K562 (cell line): ENCODE measurements at regions of chrX and their contacts with region 1.

Region 1: GRCh38 chrX:153947009-153947769 is 2.7 kb upstream of the RENBP start:
- DNase-seq: peak; percentile 62 to 90 (median 72)
- ATAC-seq: peak; percentile 92
- H3K4me3 ChIP-seq: no peak overlapping the region
- H3K27ac ChIP-seq: peak overlapping the region; percentile 53; the same call in 2 of the 3 replicates
- H3K4me1 ChIP-seq: peaks cover 8 to 80% of the 10 kb centered on the region in 2 experiments; a peak in 4 of 5 replicates
- H3K27me3 ChIP-seq: no peaks in the 10 kb centered on the region
- CTCF ChIP-seq: peak; percentile 97 to 99 (median 99)
- EP300 ChIP-seq: no peak
- POLR2A ChIP-seq: peak; percentile 56; the same call in 1 of the 2 replicates
- RAD21 ChIP-seq: peak; percentile 74

Region 2: DNA sequence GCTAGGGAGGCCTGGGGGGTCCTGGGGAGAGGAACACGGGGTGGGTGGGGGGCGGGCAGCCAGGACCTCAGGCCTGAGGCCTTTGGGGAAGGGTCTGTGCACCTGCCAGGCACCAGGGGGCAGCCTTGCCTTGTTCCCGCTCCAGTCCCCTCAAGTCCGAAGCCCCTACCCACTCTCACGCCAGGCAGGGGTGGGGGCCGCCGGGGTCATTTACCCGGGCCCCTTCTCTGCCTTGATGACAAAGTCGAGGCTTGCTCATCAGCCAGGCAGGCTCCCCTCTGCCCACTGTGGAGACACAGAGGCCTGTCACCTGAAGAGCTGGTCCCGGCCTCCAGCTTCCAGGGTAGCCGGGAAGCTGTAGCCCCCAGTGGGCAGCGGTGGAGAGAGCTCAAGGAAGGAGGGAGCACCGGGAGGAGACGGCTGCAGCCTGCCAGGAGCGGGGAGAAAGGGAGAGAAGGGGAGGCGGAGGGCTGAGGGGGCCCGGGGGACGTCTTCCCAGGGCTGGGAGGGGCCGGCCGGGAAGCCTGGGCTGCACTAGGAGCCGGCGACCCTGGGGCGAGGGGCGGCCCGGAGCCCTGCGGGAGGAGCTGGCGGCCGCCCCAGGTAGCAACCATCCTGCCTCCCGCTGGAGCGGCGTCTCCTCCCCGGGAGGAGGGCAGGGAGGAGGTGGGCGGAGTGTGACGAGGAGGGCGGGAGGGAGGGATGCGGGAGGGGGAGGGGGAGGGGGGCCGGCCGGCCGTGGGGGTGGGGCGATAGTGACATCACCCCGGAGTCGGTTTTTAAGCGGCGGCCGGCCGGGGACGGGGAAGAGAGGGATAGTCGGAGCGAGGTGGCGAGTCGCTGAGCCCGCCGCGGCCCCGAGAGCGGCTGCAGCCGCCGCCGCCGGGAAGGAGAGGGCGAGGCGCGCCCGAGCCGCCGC is 259.8 kb before region 1 on chrX and contains the start of gene SLC6A8:
- CTCF ChIA-PET with region 1: no interaction called
- POLR2A ChIA-PET with region 1: no interaction called
- in situ Hi-C with region 1: no loop called
- intact Hi-C with region 1: no loop called
- DNase-seq: peak; percentile 78 to 90 (median 82)
- ATAC-seq: peak; percentile 64
- H3K4me3 ChIP-seq: peak within 1 kb of the TSS; percentile 51
- H3K27ac ChIP-seq: peak within 1 kb of the TSS; percentile 92
- H3K4me1 ChIP-seq: peaks cover 16 to 62% of the 10 kb centered on the region in 2 experiments; a peak in 4 of 5 replicates
- H3K27me3 ChIP-seq: no peaks in the 10 kb centered on the region
- CTCF ChIP-seq: peak; percentile 28 to 39 (median 38); a peak in 4 of 6 replicates
- EP300 ChIP-seq: no peak
- POLR2A ChIP-seq: no peak
- RAD21 ChIP-seq: no peak
- polyA plus RNA-seq, gene SLC6A8: 0.68 to 1.7 TPM

Region 3: DNA sequence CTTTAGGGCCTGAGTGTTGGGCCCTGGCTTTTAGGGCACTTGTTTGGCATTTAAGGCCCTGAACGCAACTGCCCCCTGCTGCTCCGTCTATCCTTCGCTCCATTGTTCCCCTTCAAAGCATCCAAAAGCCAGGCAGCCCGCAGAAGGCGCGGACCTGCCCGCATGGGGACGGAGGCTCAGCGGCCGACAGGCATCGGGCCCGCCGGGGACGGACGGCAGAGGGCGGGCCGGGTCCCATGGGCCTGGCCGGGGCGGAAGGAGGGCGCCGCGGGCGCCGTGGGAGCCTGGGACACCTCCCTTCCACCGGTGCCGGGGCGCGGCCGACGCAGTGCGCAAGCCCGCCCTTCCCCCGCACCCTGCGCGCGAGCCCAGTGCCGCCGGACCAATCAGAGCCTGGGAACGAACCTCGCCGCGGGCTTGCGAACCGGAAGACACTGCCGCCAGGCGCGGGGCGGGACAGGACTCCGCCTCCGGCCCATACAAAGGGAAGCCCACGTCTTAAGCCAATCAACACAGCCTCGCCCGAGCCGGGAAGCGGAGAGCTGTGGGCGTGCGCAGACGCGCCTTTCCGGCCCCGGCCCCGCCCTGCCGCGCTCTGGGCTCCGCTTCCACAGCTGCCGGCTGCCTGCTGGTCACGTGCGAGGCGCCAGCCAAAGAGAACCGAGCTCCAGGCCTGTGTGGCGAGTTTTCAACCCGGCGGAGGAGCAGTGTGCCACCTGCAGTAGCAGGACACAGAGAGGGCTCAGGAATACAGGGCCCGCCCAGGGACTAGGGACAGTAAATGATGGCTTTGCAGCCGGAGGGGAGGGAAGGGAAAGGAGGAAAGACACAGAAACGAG is 19.0 kb before region 1 on chrX:
- CTCF ChIA-PET with region 1: interaction called, 3 read pairs
- POLR2A ChIA-PET with region 1: interaction called, 7 read pairs
- in situ Hi-C with region 1: no loop called
- intact Hi-C with region 1: loop called (anchors 1 kb)
- DNase-seq: peak; percentile 85 to 97 (median 90)
- ATAC-seq: peak; percentile 90
- H3K4me3 ChIP-seq: peak overlapping the region; percentile 58
- H3K27ac ChIP-seq: peak overlapping the region; percentile 98
- H3K4me1 ChIP-seq: peaks cover 29 to 66% of the 10 kb centered on the region in 2 experiments; a peak in 4 of 5 replicates
- H3K27me3 ChIP-seq: no peaks in the 10 kb centered on the region
- CTCF ChIP-seq: peak in 2 of 3 experiments; percentile 33 to 38; a peak in 4 of 6 replicates
- EP300 ChIP-seq: no peak
- POLR2A ChIP-seq: peak; percentile 69
- RAD21 ChIP-seq: peak; percentile 14 to 25; a peak in 2 of 4 replicates

Region 4: DNA sequence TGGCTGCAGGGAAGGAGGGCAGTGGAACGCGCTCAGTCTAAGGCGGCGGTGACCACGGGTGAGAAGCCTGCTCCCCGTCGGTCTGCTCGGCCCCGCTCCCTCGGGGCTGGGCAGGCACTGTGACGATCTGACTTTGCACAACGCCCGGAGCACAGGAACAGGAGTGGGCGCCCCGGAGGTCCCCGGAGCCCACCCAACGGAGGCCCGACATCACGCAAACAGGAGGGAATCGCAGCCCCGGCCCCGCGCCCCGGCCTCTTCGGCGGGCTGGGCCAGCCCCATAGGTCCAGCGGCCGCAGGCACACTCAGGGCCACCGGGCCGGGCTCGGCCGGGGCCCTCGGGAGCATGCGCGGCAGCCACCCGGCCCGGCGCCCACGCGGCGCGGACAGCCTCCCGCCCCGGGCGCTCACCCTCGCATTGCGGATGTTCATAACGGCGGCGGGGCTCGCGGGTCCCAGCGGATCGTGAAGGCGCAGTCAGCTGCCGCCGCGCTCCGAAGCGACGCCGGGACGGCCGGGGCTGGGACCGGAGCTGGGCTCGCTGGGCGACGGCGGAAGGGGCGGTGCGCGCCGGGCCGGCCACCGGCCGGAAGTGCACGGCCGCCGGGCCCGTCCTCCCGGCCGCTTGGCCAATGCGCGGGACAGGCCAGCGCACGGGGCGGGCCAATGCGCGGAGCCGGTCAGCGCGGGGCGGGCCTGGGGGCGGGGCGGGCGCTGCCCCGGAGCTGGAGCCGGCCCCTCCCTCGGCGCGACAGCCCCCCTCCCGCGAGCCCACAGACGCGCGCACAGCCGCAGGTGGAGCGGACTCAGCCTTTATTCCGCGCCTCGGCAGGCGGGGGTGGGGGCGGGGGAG is 12.5 kb before region 1 on chrX and contains the start of gene NAA10:
- CTCF ChIA-PET with region 1: no interaction called
- POLR2A ChIA-PET with region 1: interaction called, 12 read pairs
- in situ Hi-C with region 1: no loop called
- intact Hi-C with region 1: no loop called
- DNase-seq: peak; percentile 87 to 94 (median 88)
- ATAC-seq: peak; percentile 98
- H3K4me3 ChIP-seq: peak within 1 kb of the TSS; percentile 97
- H3K27ac ChIP-seq: peak within 1 kb of the TSS; percentile 71
- H3K4me1 ChIP-seq: peaks cover 13 to 43% of the 10 kb centered on the region in 2 experiments; a peak in 4 of 5 replicates
- H3K27me3 ChIP-seq: no peaks in the 10 kb centered on the region
- CTCF ChIP-seq: no peak
- EP300 ChIP-seq: no peak
- POLR2A ChIP-seq: no peak
- RAD21 ChIP-seq: peak in 1 of 2 experiments; percentile 3; a peak in 1 of 4 replicates
- polyA plus RNA-seq, gene NAA10: 11.1 to 26.5 TPM

Region 5: GRCh38 chrX:153981771-153982533 is 34.8 kb after region 1 on chrX:
- CTCF ChIA-PET with region 1: no interaction called
- POLR2A ChIA-PET with region 1: no interaction called
- in situ Hi-C with region 1: no loop called
- intact Hi-C with region 1: no loop called
- DNase-seq: no peak
- ATAC-seq: no peak
- H3K4me3 ChIP-seq: no peak overlapping the region
- H3K27ac ChIP-seq: no peak overlapping the region
- H3K4me1 ChIP-seq: peaks cover 13 to 38% of the 10 kb centered on the region in 2 experiments
- H3K27me3 ChIP-seq: no peaks in the 10 kb centered on the region
- CTCF ChIP-seq: no peak
- EP300 ChIP-seq: no peak
- POLR2A ChIP-seq: no peak
- RAD21 ChIP-seq: no peak